T-cell (primary cell): ENCODE measurements at regions of chr11 and their contacts with region 1.

Region 1: GRCh38 chr11:74232311-74232950 is 61.3 kb downstream of the PPME1 start:
- DNase-seq: peak in 32 of 35 experiments; percentile 9 to 65 (median 35)
- ATAC-seq: peak; percentile 95 to 100 (median 99)
- H3K4me3 ChIP-seq: peak overlapping the region in 1 of 2 donors; percentile 3
- H3K4me3 Mint-ChIP-seq: peak overlapping the region in 1 of 3 donors; percentile 43
- H3K27ac ChIP-seq: peak overlapping the region; percentile 69
- H3K27ac Mint-ChIP-seq: peak overlapping the region in 1 of 2 donors; percentile 88
- H3K4me1 ChIP-seq: peaks cover 17 to 39% of the 10 kb centered on the region in 2 experiments
- H3K4me1 Mint-ChIP-seq: peaks cover 9 to 30% (median 21%) of the 10 kb centered on the region in 3 donors
- H3K27me3 ChIP-seq: no peaks in the 10 kb centered on the region
- H3K27me3 Mint-ChIP-seq: no peaks in the 10 kb centered on the region

Region 2: GRCh38 chr11:74321487-74322188 is 89.2 kb after region 1 on chr11:
- CTCF ChIA-PET with region 1: no interaction called
- POLR2A ChIA-PET with region 1: interaction called in 1 of 2 experiments, 11 read pairs
- DNase-seq: peak in 6 of 35 experiments; percentile 2 to 57 (median 10)
- ATAC-seq: peak in 1 of 4 experiments; percentile 45
- H3K4me3 ChIP-seq: no peak overlapping the region
- H3K4me3 Mint-ChIP-seq: no peak overlapping the region
- H3K27ac ChIP-seq: no peak overlapping the region
- H3K27ac Mint-ChIP-seq: no peak overlapping the region
- H3K4me1 ChIP-seq: no peaks in the 10 kb centered on the region
- H3K4me1 Mint-ChIP-seq: peaks cover 0 to 2% (median 0%) of the 10 kb centered on the region in 3 donors
- H3K27me3 ChIP-seq: peaks cover 0 to 15% of the 10 kb centered on the region in 2 experiments
- H3K27me3 Mint-ChIP-seq: peaks cover 3 to 20% of the 10 kb centered on the region in 2 donors

Region 3: GRCh38 chr11:74398244-74399159 is 166.1 kb after region 1 on chr11 and contains the start of gene PGM2L1:
- CTCF ChIA-PET with region 1: no interaction called
- POLR2A ChIA-PET with region 1: no interaction called
- DNase-seq: peak; percentile 86 to 96 (median 93)
- ATAC-seq: peak; percentile 86 to 89 (median 87)
- H3K4me3 ChIP-seq: peak within 1 kb of the TSS; percentile 74 to 97
- H3K4me3 Mint-ChIP-seq: peak within 1 kb of the TSS; percentile 91 to 100 (median 99)
- H3K27ac ChIP-seq: peak within 1 kb of the TSS; percentile 72
- H3K27ac Mint-ChIP-seq: peak within 1 kb of the TSS; percentile 98
- H3K4me1 ChIP-seq: peaks cover 8 to 11% of the 10 kb centered on the region in 2 experiments
- H3K4me1 Mint-ChIP-seq: peaks cover 31 to 34% (median 34%) of the 10 kb centered on the region in 3 donors
- H3K27me3 ChIP-seq: no peaks in the 10 kb centered on the region
- H3K27me3 Mint-ChIP-seq: no peaks in the 10 kb centered on the region
- total RNA-seq, gene PGM2L1: 8.6 to 17.0 (median 15.0) TPM

Region 4: GRCh38 chr11:74936976-74937375 is 704.5 kb after region 1 on chr11:
- CTCF ChIA-PET with region 1: no interaction called
- POLR2A ChIA-PET with region 1: interaction called in 1 of 2 experiments, 17 read pairs
- DNase-seq: no peak
- ATAC-seq: no peak
- H3K4me3 ChIP-seq: no peak overlapping the region
- H3K4me3 Mint-ChIP-seq: no peak overlapping the region
- H3K27ac ChIP-seq: no peak overlapping the region
- H3K27ac Mint-ChIP-seq: no peak overlapping the region
- H3K4me1 ChIP-seq: no peaks in the 10 kb centered on the region
- H3K4me1 Mint-ChIP-seq: peaks cover 0 to 9% (median 0%) of the 10 kb centered on the region in 3 donors
- H3K27me3 ChIP-seq: no peaks in the 10 kb centered on the region
- H3K27me3 Mint-ChIP-seq: no peaks in the 10 kb centered on the region